Adrenal gland (tissue), 19 donors: ENCODE measurements at regions of chr15 and their contacts with region 1.

Region 1: GRCh38 chr15:100111103-100112060 is 230.4 kb downstream of the ADAMTS17 start:
- DNase-seq: peak; percentile 66 to 87 (median 77)
- H3K4me3 ChIP-seq: no peak overlapping the region
- H3K27ac ChIP-seq: peak overlapping the region in 3 of 5 donors; percentile 43 to 90 (median 44)
- H3K4me1 ChIP-seq: peaks cover 14 to 48% of the 10 kb centered on the region in 2 donors
- H3K27me3 ChIP-seq: no peaks in the 10 kb centered on the region
- CTCF ChIP-seq: no peak
- POLR2A ChIP-seq: peak in 1 of 2 donors; percentile 8

Region 2: GRCh38 chr15:99961011-99961441 is 150.4 kb before region 1 on chr15:
- intact Hi-C with region 1: loop called in 1 of 2 experiments (anchors 10 kb)
- DNase-seq: peak in 6 of 7 donors; percentile 35 to 74 (median 64)
- H3K4me3 ChIP-seq: no peak overlapping the region
- H3K27ac ChIP-seq: no peak overlapping the region
- H3K4me1 ChIP-seq: no peaks in the 10 kb centered on the region
- H3K27me3 ChIP-seq: peaks cover 11% of the 10 kb centered on the region
- CTCF ChIP-seq: peak; percentile 8 to 56 (median 50)
- POLR2A ChIP-seq: no peak

Region 3: DNA sequence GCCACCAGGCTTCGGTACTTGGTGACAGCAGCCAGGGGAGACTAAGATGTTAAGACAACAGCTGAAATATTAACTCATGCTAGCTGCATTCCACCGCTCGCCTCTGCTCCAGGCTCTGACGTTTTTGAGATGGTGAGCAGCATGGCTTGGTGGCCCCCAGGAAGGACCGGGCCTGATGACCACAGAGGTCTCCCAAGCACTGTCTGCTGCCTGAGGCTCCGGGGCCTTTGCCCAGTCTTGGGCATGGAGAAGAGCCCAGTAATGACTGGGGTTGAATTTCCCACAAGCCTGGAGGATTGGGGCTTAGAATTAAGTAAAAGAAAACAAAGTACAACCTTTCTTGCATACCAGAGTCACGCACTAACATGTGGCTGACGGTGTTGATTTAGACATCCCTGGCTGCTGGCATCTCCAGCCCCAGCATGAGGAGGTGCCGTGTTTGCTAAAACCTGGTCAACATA is 134.5 kb before region 1 on chr15:
- intact Hi-C with region 1: loop called in 1 of 2 experiments (anchors 10 kb)
- DNase-seq: no peak
- H3K4me3 ChIP-seq: no peak overlapping the region
- H3K27ac ChIP-seq: no peak overlapping the region
- H3K4me1 ChIP-seq: no peaks in the 10 kb centered on the region
- H3K27me3 ChIP-seq: no peaks in the 10 kb centered on the region
- CTCF ChIP-seq: no peak
- POLR2A ChIP-seq: no peak